PC-9 (cell line): ENCODE measurements at regions of chr22 and their contacts with region 1.

Region 1: DNA sequence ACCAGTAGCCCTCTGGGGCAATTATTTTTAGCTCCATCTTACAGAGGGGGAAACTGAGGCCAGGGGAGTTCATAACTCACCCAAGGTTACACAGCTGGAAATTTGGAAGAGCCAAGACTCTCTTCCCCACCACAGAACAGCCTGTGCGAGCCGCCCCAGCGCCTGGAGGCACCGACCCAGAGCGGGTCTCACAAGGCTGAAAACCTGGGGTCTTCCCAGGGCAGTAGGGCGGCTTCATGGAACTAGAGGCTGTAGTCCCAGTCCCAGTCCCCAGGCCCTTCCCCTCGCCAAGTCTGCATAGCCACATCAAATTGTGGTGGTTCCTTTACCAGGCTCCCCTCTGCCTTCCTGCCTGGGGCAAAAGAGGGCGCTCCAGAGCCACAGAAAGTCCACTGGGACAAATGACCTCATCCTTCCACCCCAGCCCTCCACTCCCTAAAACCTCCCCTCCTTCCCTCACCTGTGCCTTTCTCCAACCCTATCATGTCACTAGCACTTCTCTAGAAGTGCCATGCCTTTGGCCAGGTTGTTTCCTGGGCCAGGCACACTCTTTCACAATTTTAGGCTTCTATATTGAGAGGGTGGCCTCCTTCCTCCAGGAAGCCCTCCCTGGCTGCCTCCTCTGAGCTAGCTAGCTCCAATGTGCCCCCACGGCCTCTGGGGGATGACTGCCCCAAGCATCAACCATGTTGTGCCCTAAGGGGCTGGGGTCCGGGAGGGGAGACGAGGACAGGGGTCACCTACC is 15.2 kb upstream of the CDC42EP1 start:
- DNase-seq: peak; percentile 77 to 87
- H3K4me3 ChIP-seq: no peak overlapping the region
- H3K27ac ChIP-seq: 0 out of 2 replicates have a peak overlapping the region, but pooled peaks have one; percentile 19
- H3K4me1 ChIP-seq: peaks cover 81% of the 10 kb centered on the region
- H3K27me3 ChIP-seq: no peaks in the 10 kb centered on the region
- CTCF ChIP-seq: peak; percentile 81

Region 2: GRCh38 chr22:37561212-37562048 is 16.3 kb after region 1 on chr22:
- CTCF ChIA-PET with region 1: interaction called, 52 read pairs
- POLR2A ChIA-PET with region 1: interaction called, 9 read pairs
- intact Hi-C with region 1: loop called (anchors 1 kb)
- DNase-seq: peak; percentile 78 to 94
- H3K4me3 ChIP-seq: peak overlapping the region; percentile 95
- H3K27ac ChIP-seq: peak overlapping the region; percentile 82
- H3K4me1 ChIP-seq: peaks cover 57% of the 10 kb centered on the region
- H3K27me3 ChIP-seq: no peaks in the 10 kb centered on the region
- CTCF ChIP-seq: peak; percentile 98

Region 3: DNA sequence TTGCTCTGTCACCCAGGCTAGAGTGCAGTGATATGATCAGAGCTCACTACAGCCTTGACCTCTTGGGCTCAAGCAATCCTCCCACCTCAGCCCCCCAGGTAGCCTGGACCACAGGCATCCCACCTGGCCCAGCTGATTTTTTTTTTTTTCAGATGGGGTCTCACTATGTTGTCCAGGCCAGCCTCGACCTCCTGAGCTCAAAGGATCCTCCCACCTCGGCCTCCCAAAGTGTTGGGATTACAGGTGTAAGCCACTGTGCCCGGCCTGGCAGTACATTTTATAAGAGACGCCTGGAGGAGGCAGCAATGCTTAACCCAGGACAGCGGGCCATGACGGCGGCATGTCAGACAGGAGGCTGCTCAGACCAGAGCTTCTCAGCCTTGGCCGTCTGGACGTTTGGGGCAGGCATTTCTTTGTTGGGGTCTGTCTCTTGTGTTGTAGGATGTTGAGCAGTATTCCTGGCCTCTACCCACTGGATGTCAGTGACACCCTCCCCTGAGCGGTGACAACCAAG is 30.4 kb after region 1 on chr22:
- CTCF ChIA-PET with region 1: interaction called, 16 read pairs
- POLR2A ChIA-PET with region 1: no interaction called
- intact Hi-C with region 1: no loop called
- DNase-seq: no peak
- H3K4me3 ChIP-seq: no peak overlapping the region
- H3K27ac ChIP-seq: no peak overlapping the region
- H3K4me1 ChIP-seq: peaks cover 15% of the 10 kb centered on the region
- H3K27me3 ChIP-seq: no peaks in the 10 kb centered on the region
- CTCF ChIP-seq: no peak

Region 4: DNA sequence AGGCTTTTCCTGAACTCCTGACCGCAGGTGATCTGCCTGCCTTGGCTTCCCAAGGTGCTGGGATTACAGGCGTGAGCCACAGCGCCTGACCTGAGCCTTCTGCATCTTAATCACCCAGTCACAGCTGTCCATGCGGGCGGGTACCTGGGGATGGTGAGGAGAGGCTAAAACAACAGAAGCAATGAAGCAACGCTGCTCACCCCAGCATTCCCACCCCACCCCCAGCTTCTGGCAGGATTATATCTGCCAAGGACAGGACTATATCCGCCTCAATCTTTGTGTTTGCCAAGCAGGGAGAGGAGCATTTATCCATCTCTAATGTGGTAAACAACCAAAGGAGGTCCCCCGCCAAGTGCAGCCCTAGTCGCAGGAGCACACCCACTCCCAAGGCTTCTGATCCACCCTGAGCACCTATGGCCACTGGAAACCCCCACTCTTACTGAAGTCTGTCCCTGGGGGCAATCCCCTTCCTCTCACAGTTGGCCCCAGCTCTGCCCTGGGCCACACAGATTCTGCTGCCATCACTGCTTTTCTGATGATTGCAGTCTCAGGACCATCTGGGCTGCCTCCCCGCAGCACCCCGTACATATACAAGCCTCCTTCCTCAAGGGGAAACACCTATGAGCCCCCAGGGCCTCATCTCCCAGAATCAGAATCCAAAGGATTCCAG is 43.6 kb after region 1 on chr22:
- CTCF ChIA-PET with region 1: interaction called, 21 read pairs
- POLR2A ChIA-PET with region 1: no interaction called
- intact Hi-C with region 1: loop called (anchors 1 kb)
- DNase-seq: peak in 1 of 2 experiments; percentile 66
- H3K4me3 ChIP-seq: no peak overlapping the region
- H3K27ac ChIP-seq: no peak overlapping the region
- H3K4me1 ChIP-seq: peaks cover 5% of the 10 kb centered on the region; the same call in 1 of the 2 replicates
- H3K27me3 ChIP-seq: no peaks in the 10 kb centered on the region
- CTCF ChIP-seq: no peak

Region 5: DNA sequence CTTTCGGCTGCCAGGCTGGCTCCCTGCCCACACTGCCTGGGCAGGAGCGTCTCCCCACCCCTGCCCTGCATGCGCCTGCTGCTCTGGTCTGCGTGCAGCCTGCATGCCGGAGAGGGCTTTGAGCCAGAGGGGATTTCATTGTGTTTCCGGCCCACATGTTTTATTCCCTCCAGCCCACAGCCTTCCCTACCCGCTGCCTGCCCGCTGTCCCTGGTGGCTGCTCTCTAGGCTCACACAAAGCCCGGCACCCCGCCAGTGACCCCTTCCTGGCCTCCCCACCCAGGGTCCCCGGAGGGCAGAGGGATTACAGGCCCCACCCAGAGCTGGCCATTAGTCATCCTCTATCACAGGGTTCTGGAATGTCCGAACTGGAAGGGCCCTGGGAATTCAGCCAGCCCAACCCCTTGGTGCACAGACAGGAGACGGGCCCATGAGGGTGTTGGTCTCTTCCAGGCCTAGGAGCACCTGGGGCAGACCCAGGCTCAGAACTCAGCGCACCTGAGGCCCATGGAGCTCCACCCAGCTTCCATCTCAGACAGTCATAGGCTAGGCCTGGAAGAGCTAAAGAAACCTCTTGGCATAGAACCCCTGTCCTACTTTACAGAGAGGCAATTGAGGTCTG is 207.4 kb after region 1 on chr22:
- CTCF ChIA-PET with region 1: no interaction called
- POLR2A ChIA-PET with region 1: interaction called, 8 read pairs
- intact Hi-C with region 1: loop called (anchors 10 kb)
- DNase-seq: peak; percentile 100
- H3K4me3 ChIP-seq: no peak overlapping the region
- H3K27ac ChIP-seq: peak overlapping the region; percentile 95
- H3K4me1 ChIP-seq: peaks cover 74% of the 10 kb centered on the region
- H3K27me3 ChIP-seq: no peaks in the 10 kb centered on the region
- CTCF ChIP-seq: no peak; the same call in 1 of the 2 replicates

Region 6: DNA sequence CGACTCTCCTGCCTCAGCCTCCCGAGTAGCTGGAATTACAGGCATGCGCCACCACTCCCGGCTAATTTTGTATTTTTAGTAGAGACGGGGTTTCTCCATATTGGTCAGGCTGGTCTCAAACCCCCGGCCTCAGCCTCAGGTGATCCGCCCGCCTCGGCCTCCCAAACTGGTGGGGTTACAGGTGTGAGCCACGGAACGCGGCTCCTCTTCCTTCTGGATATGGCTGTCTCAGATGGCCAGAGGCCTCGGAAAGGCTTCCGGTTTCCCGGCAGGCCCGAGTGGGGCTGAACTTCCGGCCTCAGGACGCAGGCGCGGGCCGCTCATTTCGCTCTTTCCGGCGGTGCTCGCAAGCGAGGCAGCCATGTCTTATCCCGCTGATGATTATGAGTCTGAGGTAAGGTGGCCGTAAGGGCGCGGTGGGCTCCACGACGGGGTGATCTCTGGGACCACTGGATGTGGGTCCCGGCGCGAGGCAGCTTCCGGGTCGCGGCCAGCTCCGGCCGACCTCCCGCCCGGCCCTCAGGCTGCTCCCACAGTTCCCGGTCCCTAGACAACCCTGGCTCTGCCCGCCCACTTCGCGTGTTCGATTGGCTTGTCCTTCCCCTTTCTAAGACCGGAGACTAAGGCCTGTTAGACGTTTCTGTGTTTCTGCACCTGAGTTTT is 304.1 kb after region 1 on chr22 and contains the start of gene EIF3L:
- CTCF ChIA-PET with region 1: no interaction called
- POLR2A ChIA-PET with region 1: no interaction called
- intact Hi-C with region 1: loop called (anchors 10 kb)
- DNase-seq: peak; percentile 91 to 92
- H3K4me3 ChIP-seq: peak within 1 kb of the TSS; percentile 89
- H3K27ac ChIP-seq: peak within 1 kb of the TSS; percentile 94
- H3K4me1 ChIP-seq: peaks cover 21% of the 10 kb centered on the region
- H3K27me3 ChIP-seq: no peaks in the 10 kb centered on the region
- CTCF ChIP-seq: no peak
- total RNA-seq, gene EIF3L: 566 and 582 TPM in 2 replicates